Mammary epithelial cell (primary cell): ENCODE measurements at regions of chr5 and their contacts with region 1.

Region 1: GRCh38 chr5:160119142-160119904 is at the start of gene PWWP2A:
- DNase-seq: peak; percentile 100
- H3K4me3 ChIP-seq: peak within 1 kb of the TSS; percentile 85 to 99 (median 99)
- H3K27ac ChIP-seq: peak within 1 kb of the TSS; percentile 60
- H3K4me1 ChIP-seq: peaks cover 7% of the 10 kb centered on the region
- H3K27me3 ChIP-seq: no peaks in the 10 kb centered on the region
- CTCF ChIP-seq: peak in 1 of 2 donors; percentile 17
- total RNA-seq, gene PWWP2A: 14.7 to 16.7 TPM

Region 2: DNA sequence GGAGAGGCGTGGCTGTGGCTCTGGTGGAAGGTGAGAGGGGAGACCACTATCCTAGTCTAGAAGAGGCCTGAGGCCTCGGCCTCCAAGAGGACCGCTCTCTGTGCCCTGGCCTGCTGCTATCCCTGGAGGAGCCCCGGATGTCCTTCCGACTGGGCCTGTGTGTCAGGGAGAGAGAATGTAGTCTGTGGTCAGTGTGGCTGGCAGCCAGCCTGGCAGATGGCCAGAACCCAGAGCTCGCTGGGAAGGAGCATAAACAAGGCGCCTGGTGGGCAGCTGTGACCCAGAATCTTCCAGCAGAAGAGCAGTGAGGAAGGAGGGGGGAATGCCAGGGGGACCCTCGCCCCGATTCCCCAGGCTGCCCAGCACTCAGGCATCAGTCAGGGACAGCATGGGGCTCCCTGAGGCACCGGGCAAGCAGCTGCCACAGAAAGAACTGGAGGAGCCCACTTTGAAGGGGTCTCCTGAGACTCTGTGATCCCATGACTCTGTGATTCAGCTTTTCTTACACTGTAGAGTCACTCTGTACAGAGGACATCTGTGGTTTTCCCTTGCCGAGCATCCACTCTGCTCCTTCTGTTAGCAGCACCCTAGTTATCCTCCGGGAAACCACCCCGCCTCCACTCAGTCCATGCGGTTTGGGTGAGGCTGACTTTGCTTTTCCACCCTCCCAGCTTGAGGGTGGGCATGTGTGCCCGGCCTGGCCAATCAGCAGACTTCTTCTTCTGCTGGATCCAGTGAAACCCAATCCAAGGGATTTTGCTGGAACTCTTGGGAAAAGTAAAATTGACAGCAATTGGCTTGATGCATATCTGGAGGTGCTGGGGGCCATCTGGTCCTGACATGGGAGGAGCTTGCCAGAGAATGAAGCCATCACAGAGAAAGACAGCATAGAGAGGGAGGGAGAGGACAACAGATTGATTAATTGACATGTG is 46.1 kb after region 1 on chr5:
- CTCF ChIA-PET with region 1: no interaction called
- dilution Hi-C with region 1: no loop called
- in situ Hi-C with region 1: no loop called
- intact Hi-C with region 1: loop called (anchors 1 kb)
- DNase-seq: peak; percentile 98
- H3K4me3 ChIP-seq: peak overlapping the region in 1 of 3 experiments; percentile 18
- H3K27ac ChIP-seq: peak overlapping the region; percentile 90
- H3K4me1 ChIP-seq: peaks cover 30% of the 10 kb centered on the region
- H3K27me3 ChIP-seq: no peaks in the 10 kb centered on the region
- CTCF ChIP-seq: no peak

Region 3: GRCh38 chr5:160188142-160189015 is 69.1 kb after region 1 on chr5:
- CTCF ChIA-PET with region 1: interaction called, 21 read pairs
- dilution Hi-C with region 1: no loop called
- in situ Hi-C with region 1: no loop called
- intact Hi-C with region 1: no loop called
- DNase-seq: no peak
- H3K4me3 ChIP-seq: peak overlapping the region in 2 of 3 experiments; percentile 32 to 43
- H3K27ac ChIP-seq: no peak overlapping the region
- H3K4me1 ChIP-seq: peaks cover 4% of the 10 kb centered on the region
- H3K27me3 ChIP-seq: no peaks in the 10 kb centered on the region
- CTCF ChIP-seq: no peak